A549 (cell line): ENCODE measurements at regions of chr17 and their contacts with region 1.

Region 1: GRCh38 chr17:77068915-77069314 is 71.9 kb upstream of the SEC14L1 start:
- DNase-seq: no peak
- ATAC-seq: peak in 1 of 2 experiments; percentile 21; a peak in 2 of 6 replicates
- H3K4me3 ChIP-seq: no peak overlapping the region
- H3K27ac ChIP-seq: peak overlapping the region in 1 of 2 experiments; percentile 6; a peak in 1 of 6 replicates
- H3K4me1 ChIP-seq: peaks cover 5% of the 10 kb centered on the region; the same call in 1 of the 3 replicates
- CTCF ChIP-seq: no peak
- EP300 ChIP-seq: no peak
- POLR2A ChIP-seq: no peak
- RAD21 ChIP-seq: no peak

Region 2: GRCh38 chr17:76791053-76791980 is 277.6 kb before region 1 on chr17:
- CTCF ChIA-PET with region 1: interaction called, 14 read pairs
- POLR2A ChIA-PET with region 1: no interaction called
- DNase-seq: peak; percentile 34 to 41
- ATAC-seq: peak; percentile 56 to 63; a peak in 4 of 6 replicates
- H3K4me3 ChIP-seq: no peak overlapping the region
- H3K27ac ChIP-seq: peak overlapping the region in 1 of 2 experiments; percentile 72; a peak in 3 of 6 replicates
- H3K4me1 ChIP-seq: peaks cover 16% of the 10 kb centered on the region; the same call in 2 of the 3 replicates
- CTCF ChIP-seq: no peak
- EP300 ChIP-seq: no peak
- POLR2A ChIP-seq: no peak
- RAD21 ChIP-seq: no peak

Region 3: GRCh38 chr17:76805319-76805718 is 263.6 kb before region 1 on chr17:
- CTCF ChIA-PET with region 1: interaction called, 18 read pairs
- POLR2A ChIA-PET with region 1: no interaction called
- DNase-seq: peak in 1 of 2 experiments; percentile 47
- ATAC-seq: peak in 1 of 2 experiments; percentile 42; a peak in 1 of 6 replicates
- H3K4me3 ChIP-seq: no peak overlapping the region
- H3K27ac ChIP-seq: peak overlapping the region in 1 of 2 experiments; percentile 33; a peak in 1 of 6 replicates
- H3K4me1 ChIP-seq: peaks cover 8% of the 10 kb centered on the region; the same call in 2 of the 3 replicates
- CTCF ChIP-seq: no peak
- EP300 ChIP-seq: no peak
- POLR2A ChIP-seq: no peak
- RAD21 ChIP-seq: no peak

Region 4: DNA sequence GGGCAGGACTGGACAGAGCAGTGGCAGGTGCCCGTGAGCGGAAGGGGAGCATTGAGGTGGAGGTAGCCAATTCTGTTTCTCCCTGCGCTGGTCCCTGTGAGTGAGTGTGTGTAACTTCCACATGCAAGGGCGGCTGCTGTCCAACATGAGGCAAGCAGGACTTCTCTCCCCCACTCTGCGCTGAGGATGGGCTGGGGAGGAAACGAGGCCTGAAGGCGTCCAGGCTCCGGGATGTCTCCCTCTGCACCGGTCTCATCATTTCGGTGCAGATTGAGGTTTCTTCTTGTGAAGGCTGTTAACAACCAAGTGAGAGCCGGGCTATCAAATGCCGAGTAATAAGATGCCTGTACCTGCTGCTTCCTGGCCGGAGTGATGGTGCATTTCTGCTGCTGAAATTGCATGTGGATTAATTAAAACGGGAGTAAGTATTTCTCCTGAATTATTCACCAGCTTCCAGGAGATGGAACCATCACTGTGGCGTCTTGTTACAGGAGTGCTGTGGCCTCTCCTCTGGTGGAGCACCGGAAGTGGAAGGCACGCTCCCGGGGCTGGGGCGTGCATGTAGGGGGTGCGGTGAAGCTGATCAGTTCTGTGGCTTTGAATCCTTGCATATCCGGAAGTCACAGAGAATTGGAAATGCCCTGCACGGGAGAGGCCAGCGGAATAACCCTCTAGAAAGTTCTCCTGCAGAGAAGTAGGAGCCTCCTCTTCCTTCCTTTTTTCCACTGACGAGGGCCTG is 242.4 kb before region 1 on chr17:
- CTCF ChIA-PET with region 1: interaction called, 15 read pairs
- POLR2A ChIA-PET with region 1: no interaction called
- DNase-seq: no peak
- ATAC-seq: peak; percentile 15 to 20; a peak in 1 of 6 replicates
- H3K4me3 ChIP-seq: no peak overlapping the region
- H3K27ac ChIP-seq: no peak overlapping the region
- H3K4me1 ChIP-seq: no peaks in the 10 kb centered on the region
- CTCF ChIP-seq: no peak
- EP300 ChIP-seq: no peak
- POLR2A ChIP-seq: no peak
- RAD21 ChIP-seq: no peak

Region 5: GRCh38 chr17:76879691-76880090 is 189.2 kb before region 1 on chr17:
- CTCF ChIA-PET with region 1: interaction called, 28 read pairs
- POLR2A ChIA-PET with region 1: interaction called, 5 read pairs
- DNase-seq: no peak
- ATAC-seq: no peak
- H3K4me3 ChIP-seq: no peak overlapping the region
- H3K27ac ChIP-seq: 0 out of 6 replicates have a peak overlapping the region, but pooled peaks of 1 of the 2 experiments have one; percentile 25
- H3K4me1 ChIP-seq: no peaks in the 10 kb centered on the region
- CTCF ChIP-seq: no peak
- EP300 ChIP-seq: no peak
- POLR2A ChIP-seq: no peak
- RAD21 ChIP-seq: no peak

Region 6: GRCh38 chr17:76983075-76983775 is 85.7 kb before region 1 on chr17:
- CTCF ChIA-PET with region 1: interaction called, 12 read pairs
- POLR2A ChIA-PET with region 1: no interaction called
- DNase-seq: no peak
- ATAC-seq: peak in 1 of 2 experiments; percentile 52; a peak in 3 of 6 replicates
- H3K4me3 ChIP-seq: no peak overlapping the region
- H3K27ac ChIP-seq: peak overlapping the region in 1 of 2 experiments; percentile 59; a peak in 2 of 6 replicates
- H3K4me1 ChIP-seq: no peaks in the 10 kb centered on the region
- CTCF ChIP-seq: no peak
- EP300 ChIP-seq: no peak
- POLR2A ChIP-seq: no peak
- RAD21 ChIP-seq: no peak

Region 7: DNA sequence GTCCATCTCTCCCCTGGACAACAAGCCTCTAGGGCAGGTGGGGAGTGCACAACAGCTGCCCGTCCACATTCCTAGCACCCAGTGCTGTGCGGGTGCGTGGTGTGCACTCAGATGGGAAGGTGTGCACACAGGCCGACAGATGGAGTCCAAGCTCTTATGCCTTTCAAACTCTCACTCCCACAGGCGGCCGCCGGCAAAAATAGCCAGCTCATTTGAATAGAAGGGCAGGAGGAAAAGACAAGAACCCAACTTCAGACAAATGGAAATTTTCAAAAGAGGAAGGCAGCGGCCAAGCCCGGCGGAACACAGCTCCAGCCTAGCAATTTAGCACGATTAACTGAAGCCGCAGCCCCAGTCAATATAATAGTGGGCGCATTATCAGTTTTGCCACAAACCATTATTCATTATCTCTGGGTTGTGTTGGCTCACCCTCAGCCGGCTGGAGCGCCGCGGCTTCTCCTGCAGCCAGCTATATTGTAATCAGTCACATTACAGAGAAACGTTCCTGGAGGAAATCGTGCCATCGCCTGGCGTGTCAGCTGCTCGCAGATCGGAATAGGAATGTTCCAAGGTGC is 32.0 kb before region 1 on chr17:
- CTCF ChIA-PET with region 1: interaction called, 13 read pairs
- POLR2A ChIA-PET with region 1: no interaction called
- DNase-seq: no peak
- ATAC-seq: peak; percentile 11 to 29; a peak in 2 of 6 replicates
- H3K4me3 ChIP-seq: no peak overlapping the region
- H3K27ac ChIP-seq: no peak overlapping the region
- H3K4me1 ChIP-seq: no peaks in the 10 kb centered on the region
- CTCF ChIP-seq: no peak
- EP300 ChIP-seq: no peak
- POLR2A ChIP-seq: no peak
- RAD21 ChIP-seq: no peak

Region 8: DNA sequence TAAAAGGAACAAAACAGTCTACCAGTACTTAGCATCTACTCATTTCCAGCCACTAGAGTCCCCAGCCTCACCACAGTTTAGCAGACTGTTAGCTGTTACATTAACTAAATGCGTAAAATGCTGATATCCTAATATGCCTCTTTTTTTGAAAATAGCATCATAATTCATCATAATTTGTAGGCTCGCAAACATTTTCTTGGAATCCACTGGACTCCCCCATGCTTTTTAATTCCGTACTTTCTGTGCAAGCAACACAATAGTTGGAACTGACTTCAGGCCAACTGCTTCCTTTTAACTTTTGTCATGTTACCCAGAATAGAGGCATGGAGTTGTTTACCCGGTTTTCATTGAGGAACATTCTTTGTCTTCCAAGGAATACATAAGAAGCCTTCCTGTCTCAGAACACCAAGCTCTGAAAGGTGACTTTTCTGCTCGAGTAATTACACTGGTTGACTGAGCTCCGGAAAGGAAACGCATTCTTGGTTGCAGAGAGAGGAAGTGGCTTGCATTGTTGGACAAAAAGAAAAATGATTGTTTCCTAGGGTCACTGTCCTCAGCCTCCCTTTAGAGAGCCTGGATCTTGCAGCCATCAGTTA is 40.9 kb after region 1 on chr17:
- CTCF ChIA-PET with region 1: no interaction called
- POLR2A ChIA-PET with region 1: no interaction called
- DNase-seq: no peak
- ATAC-seq: no peak
- H3K4me3 ChIP-seq: no peak overlapping the region
- H3K27ac ChIP-seq: no peak overlapping the region
- H3K4me1 ChIP-seq: no peaks in the 10 kb centered on the region
- CTCF ChIP-seq: no peak
- EP300 ChIP-seq: no peak
- POLR2A ChIP-seq: no peak
- RAD21 ChIP-seq: no peak